Aorta (tissue), 5 donors: ENCODE measurements at regions of chr5 and their contacts with region 1.

Region 1: GRCh38 chr5:140647042-140647341 is 438 bp downstream of the NDUFA2 start:
- DNase-seq: no peak
- ATAC-seq: peak; percentile 30
- H3K4me3 ChIP-seq: peak overlapping the region; percentile 61 to 90
- H3K27ac ChIP-seq: peak overlapping the region in 1 of 2 donors; percentile 58
- H3K4me1 ChIP-seq: no peaks in the 10 kb centered on the region
- H3K27me3 ChIP-seq: no peaks in the 10 kb centered on the region

Region 2: GRCh38 chr5:140372971-140373487 is 274.0 kb before region 1 on chr5:
- intact Hi-C with region 1: loop called (anchors 10 kb)
- DNase-seq: peak; percentile 85 to 89
- ATAC-seq: peak; percentile 89
- H3K4me3 ChIP-seq: no peak overlapping the region
- H3K27ac ChIP-seq: no peak overlapping the region
- H3K4me1 ChIP-seq: no peaks in the 10 kb centered on the region
- H3K27me3 ChIP-seq: no peaks in the 10 kb centered on the region

Region 3: DNA sequence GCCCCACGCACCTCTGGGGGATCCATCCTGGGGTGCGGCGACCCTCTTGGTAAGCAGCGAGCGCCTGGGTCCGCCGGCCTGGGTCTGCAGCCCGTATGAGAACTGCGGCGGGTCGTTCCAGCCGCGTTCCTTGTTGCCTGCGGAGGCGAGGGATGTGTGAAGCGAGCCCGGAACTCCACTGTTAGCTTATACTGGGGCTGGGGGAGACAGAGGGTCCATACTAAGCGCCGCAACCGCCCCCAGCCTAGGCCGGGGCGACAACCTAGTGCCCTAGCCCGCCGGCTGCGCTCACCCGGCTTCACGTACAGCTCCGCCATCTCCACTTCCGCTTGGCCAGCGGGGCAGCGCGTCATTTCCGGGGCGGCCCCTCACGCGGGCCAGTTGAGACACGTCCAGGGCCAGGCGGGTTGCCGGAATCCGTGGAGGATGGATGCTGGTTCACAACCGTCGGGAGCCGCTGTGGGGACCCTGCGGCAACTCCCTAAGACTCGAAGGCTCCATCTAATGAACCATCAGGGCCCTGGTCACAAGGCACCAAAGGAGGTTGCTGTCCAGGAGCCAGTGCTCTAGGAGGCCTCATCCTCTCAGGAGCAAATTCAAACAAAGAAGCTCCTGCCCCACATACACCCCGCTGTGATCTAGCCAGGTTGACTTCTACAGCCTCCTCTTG is 89.7 kb before region 1 on chr5 and contains the start of gene SRA1:
- intact Hi-C with region 1: loop called in 1 of 2 experiments (anchors 5 kb)
- DNase-seq: peak; percentile 96 to 98
- ATAC-seq: peak; percentile 96
- H3K4me3 ChIP-seq: peak within 1 kb of the TSS; percentile 43 to 88
- H3K27ac ChIP-seq: peak within 1 kb of the TSS; percentile 5 to 49
- H3K4me1 ChIP-seq: peaks cover 0 to 4% of the 10 kb centered on the region in 2 donors
- H3K27me3 ChIP-seq: no peaks in the 10 kb centered on the region
- total RNA-seq, gene SRA1: 23.7 to 32.5 TPM

Region 4: GRCh38 chr5:140690941-140691924 is 44.2 kb after region 1 on chr5 and contains the starts of genes HARS1 and HARS2:
- intact Hi-C with region 1: loop called in 1 of 2 experiments (anchors 5 kb)
- DNase-seq: peak; percentile 94 to 95
- ATAC-seq: peak; percentile 97
- H3K4me3 ChIP-seq: peak within 1 kb of the TSS; percentile 59 to 93
- H3K27ac ChIP-seq: peak within 1 kb of the TSS in 1 of 2 donors; percentile 82
- H3K4me1 ChIP-seq: peaks cover 0 to 3% of the 10 kb centered on the region in 2 donors
- H3K27me3 ChIP-seq: no peaks in the 10 kb centered on the region
- total RNA-seq, gene HARS1: 48.6 to 49.3 TPM
- total RNA-seq, gene HARS2: 21.3 to 33.0 TPM

Region 5: GRCh38 chr5:140700177-140701144 is 53.5 kb after region 1 on chr5 and contains the start of gene ZMAT2:
- intact Hi-C with region 1: loop called in 1 of 2 experiments (anchors 10 kb)
- DNase-seq: peak; percentile 97
- ATAC-seq: peak; percentile 98
- H3K4me3 ChIP-seq: peak within 1 kb of the TSS; percentile 80 to 96
- H3K27ac ChIP-seq: peak within 1 kb of the TSS in 1 of 2 donors; percentile 82
- H3K4me1 ChIP-seq: no peaks in the 10 kb centered on the region
- H3K27me3 ChIP-seq: no peaks in the 10 kb centered on the region
- total RNA-seq, gene ZMAT2: 39.0 to 41.4 TPM